GM12878 (cell line): ENCODE measurements at regions of chr6 and their contacts with region 1.

Region 1: GRCh38 chr6:132300323-132300949 is 100.8 kb downstream of the MOXD1 start:
- DNase-seq: no peak
- ATAC-seq: peak; percentile 94
- H3K4me3 ChIP-seq: no peak overlapping the region
- H3K27ac ChIP-seq: no peak overlapping the region
- H3K4me1 ChIP-seq: no peaks in the 10 kb centered on the region
- H3K27me3 ChIP-seq: peaks cover 0 to 1% of the 10 kb centered on the region in 2 experiments; a peak in 1 of 4 replicates
- CTCF ChIP-seq: peak; percentile 51 to 69 (median 60); a peak in 5 of 6 replicates
- EP300 ChIP-seq: no peak
- POLR2A ChIP-seq: no peak
- RAD21 ChIP-seq: peak; percentile 94

Region 2: DNA sequence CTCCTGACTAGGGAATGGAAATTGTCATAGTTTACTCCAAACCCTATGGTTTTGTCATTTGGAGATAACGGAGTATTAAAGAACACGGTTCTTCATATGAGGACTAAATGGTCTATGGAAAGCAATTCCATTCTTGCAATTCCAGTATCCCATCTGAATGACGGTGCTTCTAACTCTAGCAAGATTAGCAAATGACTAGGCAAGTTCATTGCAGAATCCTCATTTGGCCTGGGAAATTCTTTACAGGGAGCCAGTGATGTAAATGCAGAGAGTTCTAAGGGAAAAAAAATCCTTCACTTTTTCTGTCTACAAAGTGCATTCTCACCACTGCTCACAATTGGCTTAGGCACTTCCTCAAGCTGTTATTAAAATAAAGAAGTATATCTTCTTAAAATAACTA is 10.7 kb before region 1 on chr6:
- CTCF ChIA-PET with region 1: interaction called, 462 read pairs
- POLR2A ChIA-PET with region 1: no interaction called
- RAD21 ChIA-PET with region 1: interaction called, 4 read pairs
- SMC1A ChIA-PET with region 1: interaction called, 17 read pairs
- in situ Hi-C with region 1: no loop called
- intact Hi-C with region 1: no loop called
- DNase-seq: no peak
- ATAC-seq: no peak
- H3K4me3 ChIP-seq: no peak overlapping the region
- H3K27ac ChIP-seq: no peak overlapping the region
- H3K4me1 ChIP-seq: peaks cover 3% of the 10 kb centered on the region
- H3K27me3 ChIP-seq: no peaks in the 10 kb centered on the region
- CTCF ChIP-seq: no peak
- EP300 ChIP-seq: no peak
- POLR2A ChIP-seq: no peak
- RAD21 ChIP-seq: no peak

Region 3: DNA sequence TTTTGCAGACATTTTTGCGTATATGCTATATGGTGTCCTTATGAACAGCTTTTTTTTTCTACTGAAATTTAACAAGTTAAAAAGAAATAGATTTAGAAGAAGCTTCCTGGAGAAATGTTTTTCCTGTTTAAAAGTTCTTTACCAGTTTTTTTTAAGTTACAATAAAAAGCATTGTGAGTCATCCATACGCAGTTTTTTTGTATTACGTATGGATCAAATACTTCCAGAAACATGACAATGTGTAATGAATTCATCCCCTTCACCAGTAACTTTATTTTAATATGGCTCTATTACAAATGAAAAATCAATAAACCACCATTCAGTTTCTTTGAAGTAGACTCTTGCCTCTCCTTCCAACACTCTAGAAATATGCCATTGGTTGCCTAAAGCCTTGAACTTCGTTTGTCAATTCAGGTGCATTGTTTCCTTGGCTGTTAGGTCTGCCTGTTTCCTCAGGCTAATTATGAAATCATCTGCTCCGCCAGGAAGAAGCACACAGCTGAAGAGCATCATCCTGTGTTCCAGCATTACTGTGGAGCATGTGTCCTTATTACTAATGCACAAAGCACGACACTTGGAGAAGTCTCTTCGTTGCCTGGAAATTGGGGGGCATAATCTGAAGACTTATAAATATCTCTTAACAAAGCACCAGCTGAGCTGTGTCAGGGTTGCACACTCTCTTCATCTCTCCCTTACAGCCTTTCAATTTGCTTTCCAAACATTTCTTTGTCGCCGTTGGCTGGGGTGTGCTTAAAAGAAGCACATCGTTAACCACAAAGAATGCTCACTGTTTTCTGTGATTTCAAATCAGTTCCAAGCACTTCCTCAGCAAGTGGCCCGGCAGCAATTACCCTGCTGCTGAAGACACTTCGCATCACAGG is 91.2 kb after region 1 on chr6:
- CTCF ChIA-PET with region 1: interaction called, 10 read pairs
- POLR2A ChIA-PET with region 1: no interaction called
- RAD21 ChIA-PET with region 1: interaction called, 3 read pairs
- SMC1A ChIA-PET with region 1: interaction called, 15 read pairs
- in situ Hi-C with region 1: no loop called
- intact Hi-C with region 1: loop called (anchors 1 kb)
- DNase-seq: no peak
- ATAC-seq: no peak
- H3K4me3 ChIP-seq: no peak overlapping the region
- H3K27ac ChIP-seq: no peak overlapping the region
- H3K4me1 ChIP-seq: no peaks in the 10 kb centered on the region
- H3K27me3 ChIP-seq: no peaks in the 10 kb centered on the region
- CTCF ChIP-seq: no peak
- EP300 ChIP-seq: no peak
- POLR2A ChIP-seq: no peak
- RAD21 ChIP-seq: no peak

Region 4: DNA sequence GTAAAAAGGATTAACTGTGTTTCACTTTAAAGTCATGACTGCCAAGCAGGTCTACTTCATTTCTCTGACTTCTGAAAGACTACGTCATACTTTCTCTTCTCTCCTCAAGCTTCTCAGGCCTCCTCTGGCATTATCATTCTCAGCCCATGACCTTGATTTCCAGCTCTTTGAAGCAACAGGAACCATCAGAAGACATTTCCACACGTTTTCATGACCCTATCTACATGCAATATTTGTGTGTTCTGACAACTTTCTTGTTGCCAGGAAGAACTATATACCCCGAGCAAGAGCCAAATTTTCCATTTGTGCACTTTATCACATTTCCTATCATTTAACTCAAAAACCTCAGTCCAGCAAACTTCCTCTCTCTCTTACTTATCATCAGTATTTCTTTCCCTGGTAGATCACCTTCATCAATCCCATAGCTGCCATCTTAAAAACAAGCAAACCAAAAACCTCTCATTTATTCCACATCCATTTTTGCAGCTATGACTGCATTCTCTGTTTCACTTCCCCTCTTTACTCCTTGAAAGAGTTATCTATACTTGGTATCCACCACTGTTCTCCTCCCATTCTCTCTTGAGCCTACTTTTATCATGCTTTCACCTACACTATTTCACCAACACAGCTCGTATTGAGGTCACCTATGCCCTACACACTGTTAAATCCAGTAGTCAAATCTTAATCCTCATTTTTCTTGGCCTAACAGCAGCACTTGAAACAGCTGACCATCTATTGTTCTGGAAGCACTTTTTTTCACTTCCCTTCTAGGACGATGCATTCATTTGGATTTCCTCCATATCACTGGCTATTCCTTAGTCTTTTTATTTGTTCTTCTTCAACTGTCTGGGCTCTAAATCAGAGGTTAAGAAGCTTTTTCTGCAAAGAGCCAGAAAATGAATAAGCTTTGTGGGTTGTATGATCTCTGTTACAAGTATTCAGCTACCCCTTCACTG is 165.4 kb after region 1 on chr6:
- CTCF ChIA-PET with region 1: interaction called, 12 read pairs
- POLR2A ChIA-PET with region 1: no interaction called
- RAD21 ChIA-PET with region 1: no interaction called
- SMC1A ChIA-PET with region 1: interaction called, 9 read pairs
- in situ Hi-C with region 1: no loop called
- intact Hi-C with region 1: no loop called
- DNase-seq: no peak
- ATAC-seq: peak; percentile 94
- H3K4me3 ChIP-seq: no peak overlapping the region
- H3K27ac ChIP-seq: peak overlapping the region; percentile 40; the same call in 1 of the 2 replicates
- H3K4me1 ChIP-seq: peaks cover 16% of the 10 kb centered on the region
- H3K27me3 ChIP-seq: no peaks in the 10 kb centered on the region
- CTCF ChIP-seq: no peak
- EP300 ChIP-seq: peak in 1 of 2 experiments; percentile 40; a peak in 1 of 4 replicates
- POLR2A ChIP-seq: no peak
- RAD21 ChIP-seq: no peak

Region 5: DNA sequence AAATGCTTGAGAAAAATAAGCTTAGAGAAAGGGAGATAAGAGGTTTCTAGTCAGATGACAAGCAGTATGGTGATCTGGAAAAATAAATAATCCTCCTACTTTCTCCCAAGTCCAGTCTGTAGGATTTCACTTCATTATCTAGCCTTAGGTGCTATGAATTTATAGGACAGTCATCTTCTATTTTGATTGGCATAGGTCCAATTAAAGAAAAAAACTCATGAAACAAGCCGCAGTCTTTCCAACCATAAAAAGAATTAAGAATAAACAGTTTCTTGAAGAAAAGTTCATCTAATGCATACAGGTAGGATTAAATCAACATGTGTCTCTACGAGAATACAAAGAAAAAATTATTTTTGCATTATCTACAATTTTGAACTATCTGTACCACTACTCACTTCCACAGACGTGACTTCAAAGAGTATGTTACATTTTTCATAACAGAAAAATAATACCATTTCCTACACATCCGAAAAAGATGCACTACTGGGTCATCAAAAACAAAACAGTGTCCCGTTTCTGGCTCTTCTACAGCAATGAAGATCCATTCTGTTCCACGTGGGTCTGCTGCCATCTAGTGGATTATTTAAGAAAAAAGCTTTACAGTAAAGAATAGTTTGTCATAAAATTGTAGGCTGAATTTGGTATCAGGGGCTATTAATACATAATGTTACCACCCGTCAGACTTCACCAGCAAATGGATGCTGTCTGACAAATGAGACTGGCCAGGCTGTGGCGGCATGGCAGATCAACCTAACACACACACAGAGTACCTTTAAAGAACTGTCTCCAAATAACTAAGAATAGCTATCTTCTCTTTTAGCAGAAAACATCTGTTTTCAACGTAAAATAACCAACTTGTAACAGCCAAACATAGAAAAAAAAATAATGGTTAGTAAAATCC is 183.6 kb after region 1 on chr6:
- CTCF ChIA-PET with region 1: interaction called, 199 read pairs
- POLR2A ChIA-PET with region 1: no interaction called
- RAD21 ChIA-PET with region 1: interaction called, 74 read pairs
- SMC1A ChIA-PET with region 1: interaction called, 121 read pairs
- in situ Hi-C with region 1: loop called (anchors 10 kb)
- intact Hi-C with region 1: loop called (anchors 1 kb)
- DNase-seq: peak; percentile 37
- ATAC-seq: peak; percentile 93
- H3K4me3 ChIP-seq: no peak overlapping the region
- H3K27ac ChIP-seq: no peak overlapping the region
- H3K4me1 ChIP-seq: peaks cover 31% of the 10 kb centered on the region
- H3K27me3 ChIP-seq: no peaks in the 10 kb centered on the region
- CTCF ChIP-seq: peak; percentile 47 to 74 (median 60); a peak in 5 of 6 replicates
- EP300 ChIP-seq: no peak
- POLR2A ChIP-seq: no peak
- RAD21 ChIP-seq: peak; percentile 92

Region 6: GRCh38 chr6:132530293-132530974 is 230.0 kb after region 1 on chr6:
- CTCF ChIA-PET with region 1: no interaction called
- POLR2A ChIA-PET with region 1: no interaction called
- RAD21 ChIA-PET with region 1: interaction called, 3 read pairs
- SMC1A ChIA-PET with region 1: interaction called, 4 read pairs
- in situ Hi-C with region 1: no loop called
- intact Hi-C with region 1: loop called (anchors 5 kb)
- DNase-seq: peak; percentile 21
- ATAC-seq: peak; percentile 96
- H3K4me3 ChIP-seq: no peak overlapping the region
- H3K27ac ChIP-seq: no peak overlapping the region
- H3K4me1 ChIP-seq: no peaks in the 10 kb centered on the region
- H3K27me3 ChIP-seq: no peaks in the 10 kb centered on the region; a peak in 1 of 4 replicates
- CTCF ChIP-seq: peak; percentile 57 to 74 (median 60); a peak in 5 of 6 replicates
- EP300 ChIP-seq: no peak
- POLR2A ChIP-seq: no peak
- RAD21 ChIP-seq: peak; percentile 91